Activated CD4-positive, alpha-beta memory T cell treated with anti-CD3 and anti-CD28 coated beads for 36 hours (primary cell): ENCODE measurements at regions of chr13 and their contacts with region 1.

Region 1: GRCh38 chr13:95480131-95480545 is 72.4 kb upstream of the CLDN10 start:
- DNase-seq: peak; percentile 54
- H3K4me3 Mint-ChIP-seq: no peak overlapping the region
- H3K27ac Mint-ChIP-seq: no peak overlapping the region
- H3K4me1 Mint-ChIP-seq: peaks cover 9% of the 10 kb centered on the region
- H3K27me3 Mint-ChIP-seq: peaks cover 1% of the 10 kb centered on the region

Region 2: DNA sequence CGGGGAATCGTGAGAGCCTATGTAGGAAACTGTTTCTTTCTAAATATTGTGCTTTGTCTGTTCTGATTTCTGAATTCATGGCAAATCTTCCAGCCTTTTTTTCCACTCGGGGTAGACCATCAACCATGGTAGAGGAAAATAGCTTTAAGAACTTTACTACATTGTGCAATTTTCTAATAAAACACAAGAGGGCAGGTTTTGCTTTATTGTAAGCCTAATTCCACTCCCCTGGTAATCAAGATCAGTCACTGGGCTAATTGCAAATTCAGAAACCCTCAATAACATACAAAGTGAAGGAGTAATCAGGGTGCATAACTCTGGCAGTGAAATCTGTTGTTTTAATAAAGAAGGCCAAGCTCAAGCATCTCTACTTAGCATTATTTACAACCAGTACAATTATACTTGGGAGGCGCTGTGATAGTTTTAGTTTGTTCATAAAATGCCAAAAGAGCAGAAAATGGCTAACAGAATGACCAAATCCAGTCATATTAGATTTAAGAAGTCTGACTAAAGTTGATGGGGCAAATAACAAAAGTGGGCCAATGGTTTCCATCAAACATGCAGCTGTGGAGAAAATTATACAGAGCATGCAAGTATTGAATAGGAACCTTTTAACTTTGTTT is 1044.4 kb before region 1 on chr13:
- CTCF ChIA-PET with region 1: no interaction called
- POLR2A ChIA-PET with region 1: no interaction called
- intact Hi-C with region 1: loop called (anchors 10 kb)
- DNase-seq: no peak
- H3K4me3 Mint-ChIP-seq: no peak overlapping the region
- H3K27ac Mint-ChIP-seq: no peak overlapping the region
- H3K4me1 Mint-ChIP-seq: peaks cover 17% of the 10 kb centered on the region
- H3K27me3 Mint-ChIP-seq: peaks cover 3% of the 10 kb centered on the region

Region 3: GRCh38 chr13:95191821-95192563 is 288.1 kb before region 1 on chr13:
- CTCF ChIA-PET with region 1: interaction called, 12 read pairs
- POLR2A ChIA-PET with region 1: no interaction called
- intact Hi-C with region 1: loop called (anchors 1 kb)
- DNase-seq: peak; percentile 78
- H3K4me3 Mint-ChIP-seq: no peak overlapping the region
- H3K27ac Mint-ChIP-seq: no peak overlapping the region
- H3K4me1 Mint-ChIP-seq: peaks cover 9% of the 10 kb centered on the region
- H3K27me3 Mint-ChIP-seq: no peaks in the 10 kb centered on the region

Region 4: DNA sequence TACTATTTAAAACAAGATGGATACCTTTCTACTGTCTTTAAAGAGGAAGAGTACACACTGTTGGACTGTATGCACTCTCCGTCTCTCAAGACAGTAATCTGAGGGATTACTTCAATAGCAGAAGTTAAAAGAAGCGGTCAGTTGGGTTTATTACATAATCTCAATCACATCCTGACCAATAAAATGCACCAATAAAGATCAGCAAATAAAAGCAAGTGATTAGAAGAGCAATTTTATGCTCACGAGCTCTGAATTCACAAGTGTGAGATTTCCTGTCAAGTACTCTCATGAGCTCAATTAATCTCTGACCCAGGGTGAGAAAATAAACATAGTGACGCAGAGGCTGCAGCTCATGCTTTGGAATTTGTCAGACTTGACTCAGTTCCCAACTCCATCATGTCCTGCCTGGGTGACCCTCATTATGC is 191.1 kb before region 1 on chr13:
- CTCF ChIA-PET with region 1: no interaction called
- POLR2A ChIA-PET with region 1: no interaction called
- intact Hi-C with region 1: no loop called
- DNase-seq: no peak
- H3K4me3 Mint-ChIP-seq: no peak overlapping the region
- H3K27ac Mint-ChIP-seq: no peak overlapping the region
- H3K4me1 Mint-ChIP-seq: no peaks in the 10 kb centered on the region
- H3K27me3 Mint-ChIP-seq: no peaks in the 10 kb centered on the region

Region 5: DNA sequence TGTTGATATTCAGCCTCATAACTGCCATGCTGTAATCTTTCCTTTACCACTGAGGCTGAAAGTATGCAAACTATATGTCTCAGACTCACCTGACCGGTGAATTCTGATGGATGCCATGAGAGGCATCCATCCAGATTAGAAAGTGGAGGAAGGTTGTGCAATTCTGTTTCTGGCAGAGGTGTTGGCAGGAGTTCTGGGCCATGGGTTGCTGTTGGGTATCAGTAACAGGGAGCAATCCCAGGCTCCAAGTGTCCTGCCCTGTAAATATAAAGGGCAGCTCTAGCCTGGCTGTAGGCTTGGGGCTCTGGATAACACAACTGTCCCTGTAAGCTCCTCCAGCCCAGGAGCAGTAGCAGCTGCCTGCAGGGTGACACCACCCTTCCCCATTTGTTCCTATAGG is 101.5 kb before region 1 on chr13:
- CTCF ChIA-PET with region 1: interaction called, 8 read pairs
- POLR2A ChIA-PET with region 1: no interaction called
- intact Hi-C with region 1: loop called (anchors 1 kb)
- DNase-seq: no peak
- H3K4me3 Mint-ChIP-seq: no peak overlapping the region
- H3K27ac Mint-ChIP-seq: no peak overlapping the region
- H3K4me1 Mint-ChIP-seq: peaks cover 6% of the 10 kb centered on the region
- H3K27me3 Mint-ChIP-seq: peaks cover 3% of the 10 kb centered on the region

Region 6: GRCh38 chr13:95536632-95537241 is 56.6 kb after region 1 on chr13:
- CTCF ChIA-PET with region 1: no interaction called
- POLR2A ChIA-PET with region 1: no interaction called
- intact Hi-C with region 1: loop called (anchors 1 kb)
- DNase-seq: no peak
- H3K4me3 Mint-ChIP-seq: no peak overlapping the region
- H3K27ac Mint-ChIP-seq: no peak overlapping the region
- H3K4me1 Mint-ChIP-seq: peaks cover 7% of the 10 kb centered on the region
- H3K27me3 Mint-ChIP-seq: peaks cover 18% of the 10 kb centered on the region

Region 7: GRCh38 chr13:95553581-95554385 is 73.6 kb after region 1 on chr13:
- CTCF ChIA-PET with region 1: no interaction called
- POLR2A ChIA-PET with region 1: no interaction called
- intact Hi-C with region 1: no loop called
- DNase-seq: no peak
- H3K4me3 Mint-ChIP-seq: no peak overlapping the region
- H3K27ac Mint-ChIP-seq: no peak overlapping the region
- H3K4me1 Mint-ChIP-seq: peaks cover 9% of the 10 kb centered on the region
- H3K27me3 Mint-ChIP-seq: peaks cover 52% of the 10 kb centered on the region